Heart left ventricle (tissue), 16 donors: ENCODE measurements at regions of chr2 and their contacts with region 1.

Region 1: GRCh38 chr2:112242384-112242783 is 12.5 kb downstream of the ZC3H8 start:
- DNase-seq: no peak
- ATAC-seq: no peak
- H3K4me3 ChIP-seq: no peak overlapping the region
- H3K27ac ChIP-seq: no peak overlapping the region
- H3K4me1 ChIP-seq: no peaks in the 10 kb centered on the region
- H3K27me3 ChIP-seq: no peaks in the 10 kb centered on the region
- CTCF ChIP-seq: no peak
- POLR2A ChIP-seq: no peak

Region 2: DNA sequence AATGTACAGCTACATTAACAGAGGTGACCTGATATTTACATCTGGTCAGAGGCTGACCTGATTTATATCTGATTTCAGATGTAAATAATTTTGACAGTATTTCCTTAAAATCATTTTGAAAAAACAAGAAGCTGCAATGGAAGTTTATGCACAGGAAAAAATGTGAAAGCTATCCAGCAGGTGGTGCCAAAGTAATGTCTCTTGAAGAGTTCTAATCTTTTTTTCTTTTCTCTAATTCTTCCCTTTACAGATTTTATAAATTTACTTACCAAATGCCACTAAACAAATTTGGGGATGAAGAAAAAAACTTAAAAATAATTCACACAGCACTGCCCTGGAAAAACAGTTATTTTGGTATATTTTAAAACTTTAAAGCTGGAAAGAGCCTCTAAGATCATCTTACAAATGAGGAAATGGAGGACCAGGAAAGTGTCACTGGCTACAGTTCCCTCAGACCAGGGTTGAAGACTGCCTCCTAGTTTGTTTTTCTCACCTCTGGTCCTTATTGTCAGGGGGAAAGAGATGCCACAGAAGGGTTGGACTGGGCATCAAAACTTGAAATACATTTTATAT is 120.6 kb before region 1 on chr2:
- intact Hi-C with region 1: loop called in 2 of 10 experiments (anchors 10 kb)
- DNase-seq: no peak
- ATAC-seq: no peak
- H3K4me3 ChIP-seq: no peak overlapping the region
- H3K27ac ChIP-seq: no peak overlapping the region
- H3K4me1 ChIP-seq: no peaks in the 10 kb centered on the region
- H3K27me3 ChIP-seq: no peaks in the 10 kb centered on the region
- CTCF ChIP-seq: peak; percentile 42 to 72 (median 64)
- POLR2A ChIP-seq: no peak

Region 3: GRCh38 chr2:112147382-112148168 is 94.8 kb before region 1 on chr2:
- intact Hi-C with region 1: loop called in 1 of 10 experiments (anchors 10 kb)
- DNase-seq: peak in 3 of 5 donors; percentile 35 to 43 (median 41)
- ATAC-seq: peak in 3 of 4 donors; percentile 49 to 70 (median 57)
- H3K4me3 ChIP-seq: peak overlapping the region in 2 of 12 donors; percentile 18 to 21
- H3K27ac ChIP-seq: peak overlapping the region in 9 of 12 donors; percentile 2 to 76 (median 56)
- H3K4me1 ChIP-seq: peaks cover 0 to 19% (median 2%) of the 10 kb centered on the region in 12 donors
- H3K27me3 ChIP-seq: no peaks in the 10 kb centered on the region
- CTCF ChIP-seq: no peak
- POLR2A ChIP-seq: no peak